ENCODE measurements at regions of chr2 and their contacts with region 1.

Region 1: GRCh38 chr2:96554293-96555145 is 18.0 kb downstream of the ARID5A start:
- DNase-seq: peak; percentile 82
- ATAC-seq: peak; percentile 74
- H3K4me3 Mint-ChIP-seq: peak overlapping the region; percentile 12; the same call in 1 of the 2 replicates
- H3K27ac Mint-ChIP-seq: no peak overlapping the region
- H3K4me1 Mint-ChIP-seq: peaks cover 19% of the 10 kb centered on the region
- H3K27me3 Mint-ChIP-seq: peaks cover 3% of the 10 kb centered on the region; the same call in 1 of the 2 replicates
- CTCF ChIP-seq: peak; percentile 93

Region 2: GRCh38 chr2:96148410-96149217 is 405.9 kb before region 1 on chr2:
- CTCF ChIA-PET with region 1: no interaction called
- POLR2A ChIA-PET with region 1: no interaction called
- DNase-seq: peak; percentile 75
- ATAC-seq: peak; percentile 64
- H3K4me3 Mint-ChIP-seq: peak overlapping the region; percentile 44
- H3K27ac Mint-ChIP-seq: peak overlapping the region; percentile 62; the same call in 1 of the 2 replicates
- H3K4me1 Mint-ChIP-seq: peaks cover 45% of the 10 kb centered on the region
- H3K27me3 Mint-ChIP-seq: peaks cover 35% of the 10 kb centered on the region
- CTCF ChIP-seq: no peak

Region 3: GRCh38 chr2:96509114-96509846 is 45.2 kb before region 1 on chr2:
- CTCF ChIA-PET with region 1: interaction called, 41 read pairs
- POLR2A ChIA-PET with region 1: no interaction called
- DNase-seq: peak; percentile 97
- ATAC-seq: peak; percentile 86
- H3K4me3 Mint-ChIP-seq: peak overlapping the region; percentile 55
- H3K27ac Mint-ChIP-seq: no peak overlapping the region
- H3K4me1 Mint-ChIP-seq: peaks cover 10% of the 10 kb centered on the region
- H3K27me3 Mint-ChIP-seq: peaks cover 33% of the 10 kb centered on the region
- CTCF ChIP-seq: peak; percentile 93; the same call in 1 of the 2 replicates

Region 4: DNA sequence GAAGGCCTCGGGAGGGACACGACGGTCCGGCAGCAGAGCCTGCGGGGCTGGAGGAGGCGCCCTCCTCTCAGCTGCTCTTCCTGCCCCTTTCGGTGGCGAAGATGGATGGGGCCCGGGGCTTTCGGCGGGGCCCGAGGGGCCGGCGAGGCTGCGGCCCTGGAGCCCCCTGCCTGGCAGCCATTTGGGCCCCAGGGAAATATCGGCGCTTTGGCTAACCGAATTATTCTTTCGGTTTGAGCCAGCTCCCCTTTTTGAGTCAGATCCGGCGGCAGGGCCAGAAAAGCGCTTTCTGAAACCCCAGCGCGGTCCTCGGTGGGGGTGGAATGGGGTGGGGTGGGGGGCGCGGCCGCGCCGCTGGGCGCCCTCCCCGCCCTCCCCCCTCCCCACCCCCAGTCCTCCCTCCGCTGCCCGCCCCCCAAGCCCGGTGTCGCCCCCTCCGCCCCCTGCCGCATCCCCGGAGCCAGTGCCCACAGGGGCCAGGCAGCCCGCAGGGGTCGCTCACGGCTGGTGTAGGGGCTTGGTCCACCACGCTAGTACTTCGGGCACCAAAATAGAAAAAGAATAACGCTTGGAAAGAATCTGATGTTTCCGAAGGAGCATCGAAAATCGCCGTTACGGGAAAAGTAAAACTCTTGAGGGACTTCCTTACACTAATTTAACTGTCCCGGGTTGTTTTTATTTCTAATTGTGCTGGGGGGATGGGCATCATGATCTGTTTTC is 27.1 kb before region 1 on chr2:
- CTCF ChIA-PET with region 1: interaction called, 84 read pairs
- POLR2A ChIA-PET with region 1: no interaction called
- DNase-seq: peak; percentile 59
- ATAC-seq: peak; percentile 58
- H3K4me3 Mint-ChIP-seq: peak overlapping the region; percentile 61
- H3K27ac Mint-ChIP-seq: no peak overlapping the region
- H3K4me1 Mint-ChIP-seq: peaks cover 26% of the 10 kb centered on the region
- H3K27me3 Mint-ChIP-seq: peaks cover 27% of the 10 kb centered on the region
- CTCF ChIP-seq: no peak

Region 5: DNA sequence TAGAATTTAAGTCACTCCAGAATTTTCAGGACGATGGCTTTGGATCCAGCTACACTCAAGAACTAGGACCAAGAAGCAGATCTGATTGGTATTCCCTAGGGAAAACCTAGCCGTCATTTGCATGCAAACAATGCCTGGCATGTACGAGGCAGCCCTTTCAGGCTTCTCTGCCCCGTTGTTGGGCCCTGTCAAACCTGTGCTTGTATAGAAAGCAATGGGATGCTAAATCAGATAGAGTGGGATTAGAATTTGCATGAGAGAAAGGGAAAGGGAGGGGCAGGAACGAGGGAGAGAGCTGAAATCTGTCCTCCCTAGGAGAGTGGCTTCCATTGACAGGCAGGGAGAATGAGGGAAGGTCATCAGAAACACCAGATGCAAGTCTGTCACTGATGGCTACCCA is 10.6 kb after region 1 on chr2:
- CTCF ChIA-PET with region 1: interaction called, 27 read pairs
- POLR2A ChIA-PET with region 1: no interaction called
- DNase-seq: peak; percentile 51
- ATAC-seq: peak; percentile 96
- H3K4me3 Mint-ChIP-seq: no peak overlapping the region
- H3K27ac Mint-ChIP-seq: peak overlapping the region; percentile 23; the same call in 1 of the 2 replicates
- H3K4me1 Mint-ChIP-seq: peaks cover 8% of the 10 kb centered on the region
- H3K27me3 Mint-ChIP-seq: no peaks in the 10 kb centered on the region
- CTCF ChIP-seq: no peak

Region 6: GRCh38 chr2:96580771-96581170 is 26.3 kb after region 1 on chr2:
- CTCF ChIA-PET with region 1: interaction called, 14 read pairs
- POLR2A ChIA-PET with region 1: no interaction called
- DNase-seq: no peak
- ATAC-seq: peak; percentile 76
- H3K4me3 Mint-ChIP-seq: no peak overlapping the region
- H3K27ac Mint-ChIP-seq: no peak overlapping the region
- H3K4me1 Mint-ChIP-seq: no peaks in the 10 kb centered on the region
- H3K27me3 Mint-ChIP-seq: no peaks in the 10 kb centered on the region
- CTCF ChIP-seq: no peak

Region 7: GRCh38 chr2:96760036-96760985 is 205.8 kb after region 1 on chr2 and contains the start of gene CNNM4:
- CTCF ChIA-PET with region 1: interaction called, 20 read pairs
- POLR2A ChIA-PET with region 1: no interaction called
- DNase-seq: peak; percentile 96
- ATAC-seq: peak; percentile 85
- H3K4me3 Mint-ChIP-seq: peak within 1 kb of the TSS; percentile 67
- H3K27ac Mint-ChIP-seq: peak within 1 kb of the TSS; percentile 91
- H3K4me1 Mint-ChIP-seq: peaks cover 51% of the 10 kb centered on the region
- H3K27me3 Mint-ChIP-seq: peaks cover 16% of the 10 kb centered on the region
- CTCF ChIP-seq: no peak
- total RNA-seq, gene CNNM4: 13.9 to 14.3 TPM (median 14.0 TPM) in 3 replicates

Region 8: GRCh38 chr2:96816128-96816835 is 261.8 kb after region 1 on chr2 and contains the start of gene CNNM3:
- CTCF ChIA-PET with region 1: interaction called, 14 read pairs
- POLR2A ChIA-PET with region 1: no interaction called
- DNase-seq: peak; percentile 99
- ATAC-seq: peak; percentile 94
- H3K4me3 Mint-ChIP-seq: peak within 1 kb of the TSS; percentile 83
- H3K27ac Mint-ChIP-seq: peak within 1 kb of the TSS; percentile 59
- H3K4me1 Mint-ChIP-seq: peaks cover 47% of the 10 kb centered on the region
- H3K27me3 Mint-ChIP-seq: 0 out of 2 replicates have a peak, but pooled peaks cover 2% of the 10 kb centered on the region
- CTCF ChIP-seq: peak; percentile 36; the same call in 1 of the 2 replicates
- total RNA-seq, gene CNNM3: 34.9 to 36.6 TPM (median 35.2 TPM) in 3 replicates